ENCODE measurements at regions of chr2 and their contacts with region 1.

Region 1: DNA sequence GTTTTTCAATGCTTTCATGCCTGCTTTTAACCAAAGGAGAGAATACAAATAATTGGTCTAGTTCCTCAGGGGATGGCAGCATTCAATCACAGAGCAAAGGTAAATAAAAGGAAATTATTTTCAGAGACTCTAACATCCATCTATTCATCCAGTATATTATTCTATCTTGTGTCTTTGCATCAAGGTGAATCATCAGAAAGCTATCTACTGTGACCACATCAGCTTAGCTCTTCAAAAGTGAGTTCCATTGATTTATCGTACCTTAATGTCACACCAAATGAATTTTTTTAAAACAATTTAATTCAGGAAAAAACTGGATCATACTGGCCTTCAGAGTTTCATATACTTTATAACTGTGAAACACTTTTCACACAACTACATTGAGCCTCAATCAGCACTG is 66.1 kb downstream of the CHN1 start:
- DNase-seq: no peak
- H3K4me3 Mint-ChIP-seq: no peak overlapping the region
- H3K27ac Mint-ChIP-seq: no peak overlapping the region
- H3K4me1 Mint-ChIP-seq: no peaks in the 10 kb centered on the region
- H3K27me3 Mint-ChIP-seq: peaks cover 2% of the 10 kb centered on the region

Region 2: GRCh38 chr2:174925046-174925784 is 13.8 kb before region 1 on chr2:
- intact Hi-C with region 1: no loop called
- DNase-seq: no peak
- H3K4me3 Mint-ChIP-seq: no peak overlapping the region
- H3K27ac Mint-ChIP-seq: no peak overlapping the region
- H3K4me1 Mint-ChIP-seq: no peaks in the 10 kb centered on the region
- H3K27me3 Mint-ChIP-seq: no peaks in the 10 kb centered on the region

Region 3: GRCh38 chr2:174949988-174950687 is 11.1 kb after region 1 on chr2:
- intact Hi-C with region 1: loop called (anchors 2 kb)
- DNase-seq: no peak
- H3K4me3 Mint-ChIP-seq: no peak overlapping the region
- H3K27ac Mint-ChIP-seq: no peak overlapping the region
- H3K4me1 Mint-ChIP-seq: peaks cover 2% of the 10 kb centered on the region
- H3K27me3 Mint-ChIP-seq: peaks cover 20% of the 10 kb centered on the region

Region 4: GRCh38 chr2:175012516-175012915 is 73.5 kb after region 1 on chr2:
- intact Hi-C with region 1: no loop called
- DNase-seq: no peak
- H3K4me3 Mint-ChIP-seq: no peak overlapping the region
- H3K27ac Mint-ChIP-seq: no peak overlapping the region
- H3K4me1 Mint-ChIP-seq: peaks cover 1% of the 10 kb centered on the region
- H3K27me3 Mint-ChIP-seq: peaks cover 36% of the 10 kb centered on the region

Region 5: DNA sequence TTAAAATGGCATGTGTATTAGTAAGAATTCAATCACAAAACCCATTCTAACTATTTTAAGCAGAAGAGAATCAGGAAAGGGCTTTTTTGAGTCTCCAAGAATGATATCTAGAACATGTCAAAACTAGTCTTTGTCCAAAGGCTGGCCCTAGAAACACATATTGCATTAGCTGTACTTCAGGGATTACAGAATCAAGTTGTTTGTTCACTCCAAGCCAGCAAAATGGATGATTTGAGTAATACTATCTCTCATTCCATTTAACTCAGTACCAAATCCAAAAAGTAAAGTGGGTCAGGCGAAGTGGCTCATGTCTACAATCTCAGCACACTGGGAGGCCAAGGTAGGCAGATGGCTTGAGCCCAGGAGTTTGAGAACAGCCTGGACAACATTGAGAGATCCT is 187.6 kb after region 1 on chr2:
- intact Hi-C with region 1: no loop called
- DNase-seq: no peak
- H3K4me3 Mint-ChIP-seq: no peak overlapping the region
- H3K27ac Mint-ChIP-seq: no peak overlapping the region
- H3K4me1 Mint-ChIP-seq: peaks cover 5% of the 10 kb centered on the region
- H3K27me3 Mint-ChIP-seq: no peaks in the 10 kb centered on the region

Region 6: DNA sequence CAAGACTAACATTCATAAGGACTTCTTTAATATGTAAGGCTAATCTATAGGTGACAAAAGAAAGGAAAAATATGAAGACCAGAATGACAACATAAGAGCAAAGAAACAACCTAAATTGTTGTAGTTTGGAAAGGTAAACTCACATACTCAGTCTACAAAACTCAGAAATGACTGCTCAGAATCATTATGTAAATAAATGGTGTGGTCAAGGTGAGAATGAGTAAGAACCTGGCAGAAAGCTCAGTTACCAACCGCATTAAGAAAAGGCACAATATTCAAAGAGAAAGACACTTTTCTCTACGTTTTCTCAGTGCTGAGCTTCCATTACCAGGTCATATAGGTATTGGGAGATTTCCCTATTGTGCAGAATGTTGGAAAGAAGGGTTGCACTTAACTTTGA is 213.2 kb after region 1 on chr2:
- intact Hi-C with region 1: no loop called
- DNase-seq: no peak
- H3K4me3 Mint-ChIP-seq: no peak overlapping the region
- H3K27ac Mint-ChIP-seq: no peak overlapping the region
- H3K4me1 Mint-ChIP-seq: peaks cover 44% of the 10 kb centered on the region
- H3K27me3 Mint-ChIP-seq: no peaks in the 10 kb centered on the region

Measured in activated T-helper 2 cell treated with anti-CD3 and anti-CD28 coated beads, Interferon-gamma antibody, Interleukin-2, Interleukin-4, amounts not matched to agents 10 μg/mL and 5 μg/mL and 100 μg/mL, durations not matched to agents 14 hours and 24 hours and 36 hours (primary cell).